ENCODE measurements at regions of chr14 and their contacts with region 1.

Region 1: GRCh38 chr14:99983251-99984015 is 81.8 kb upstream of the EVL start:
- DNase-seq: no peak
- H3K4me3 ChIP-seq: no peak overlapping the region
- H3K27ac ChIP-seq: no peak overlapping the region
- H3K4me1 ChIP-seq: no peaks in the 10 kb centered on the region
- H3K27me3 ChIP-seq: no peaks in the 10 kb centered on the region
- CTCF ChIP-seq: no peak
- POLR2A ChIP-seq: no peak

Region 2: GRCh38 chr14:99946652-99947489 is 36.6 kb before region 1 on chr14:
- intact Hi-C with region 1: no loop called
- DNase-seq: peak in 1 of 2 donors; percentile 39
- H3K4me3 ChIP-seq: no peak overlapping the region
- H3K27ac ChIP-seq: no peak overlapping the region
- H3K4me1 ChIP-seq: peaks cover 8 to 24% of the 10 kb centered on the region in 2 donors
- H3K27me3 ChIP-seq: no peaks in the 10 kb centered on the region
- CTCF ChIP-seq: peak; percentile 54 to 95 (median 74)
- POLR2A ChIP-seq: no peak

Region 3: GRCh38 chr14:100045642-100046312 is 62.3 kb after region 1 on chr14:
- intact Hi-C with region 1: no loop called
- DNase-seq: no peak
- H3K4me3 ChIP-seq: no peak overlapping the region
- H3K27ac ChIP-seq: no peak overlapping the region
- H3K4me1 ChIP-seq: no peaks in the 10 kb centered on the region
- H3K27me3 ChIP-seq: no peaks in the 10 kb centered on the region
- CTCF ChIP-seq: no peak
- POLR2A ChIP-seq: no peak

Region 4: GRCh38 chr14:100108042-100108825 is 124.8 kb after region 1 on chr14:
- intact Hi-C with region 1: loop called (anchors 2 kb)
- DNase-seq: peak; percentile 78 to 84
- H3K4me3 ChIP-seq: no peak overlapping the region
- H3K27ac ChIP-seq: peak overlapping the region in 1 of 3 donors; percentile 46
- H3K4me1 ChIP-seq: peaks cover 10 to 37% of the 10 kb centered on the region in 2 donors
- H3K27me3 ChIP-seq: no peaks in the 10 kb centered on the region
- CTCF ChIP-seq: peak; percentile 59 to 90 (median 78)
- POLR2A ChIP-seq: no peak

Measured in thyroid gland (tissue), 4 donors.